Stomach (tissue), 19 donors: ENCODE measurements at regions of chr9 and their contacts with region 1.

Region 1: DNA sequence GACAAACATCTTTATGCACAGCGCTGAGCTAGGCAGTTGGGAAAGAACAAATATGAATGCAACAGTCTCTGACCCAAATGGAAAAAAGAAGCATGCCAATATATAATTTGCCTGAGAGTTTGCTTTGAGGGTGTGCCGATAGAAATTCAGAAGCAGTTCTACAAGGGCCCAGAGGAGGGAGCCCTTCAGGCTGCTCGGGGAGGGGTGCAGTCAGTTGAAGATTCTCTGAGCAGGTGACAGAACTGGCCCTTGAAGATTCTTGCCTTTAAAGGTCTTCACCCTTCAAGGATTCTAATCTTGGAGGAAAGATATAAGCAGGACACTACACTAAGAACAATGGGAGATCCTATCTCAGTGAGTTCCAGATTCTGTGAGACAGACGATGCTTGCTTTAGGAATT is 3.7 kb upstream of the PAPPA start:
- DNase-seq: peak; percentile 49 to 50
- H3K4me3 ChIP-seq: no peak overlapping the region
- H3K27ac ChIP-seq: no peak overlapping the region
- H3K4me1 ChIP-seq: peaks cover 5 to 16% (median 12%) of the 10 kb centered on the region in 4 donors
- H3K27me3 ChIP-seq: peaks cover 0 to 29% (median 9%) of the 10 kb centered on the region in 3 donors
- CTCF ChIP-seq: peak in 4 of 7 experiments; percentile 34 to 59 (median 44)
- EP300 ChIP-seq: no peak
- POLR2A ChIP-seq: no peak

Region 2: GRCh38 chr9:116572095-116572748 is 422.4 kb after region 1 on chr9:
- intact Hi-C with region 1: loop called (anchors 10 kb)
- DNase-seq: peak; percentile 93 to 95
- H3K4me3 ChIP-seq: no peak overlapping the region
- H3K27ac ChIP-seq: peak overlapping the region in 1 of 5 donors; percentile 2
- H3K4me1 ChIP-seq: peaks cover 12 to 64% (median 45%) of the 10 kb centered on the region in 4 donors
- H3K27me3 ChIP-seq: no peaks in the 10 kb centered on the region
- CTCF ChIP-seq: peak in 5 of 7 experiments; percentile 77 to 96 (median 84)
- EP300 ChIP-seq: no peak
- POLR2A ChIP-seq: no peak

Region 3: GRCh38 chr9:116656501-116656971 is 506.7 kb after region 1 on chr9:
- intact Hi-C with region 1: loop called (anchors 10 kb)
- DNase-seq: no peak
- H3K4me3 ChIP-seq: no peak overlapping the region
- H3K27ac ChIP-seq: no peak overlapping the region
- H3K4me1 ChIP-seq: no peaks in the 10 kb centered on the region
- H3K27me3 ChIP-seq: no peaks in the 10 kb centered on the region
- CTCF ChIP-seq: no peak
- EP300 ChIP-seq: no peak
- POLR2A ChIP-seq: no peak